ENCODE measurements at regions of chr14 and their contacts with region 1.

Region 1: GRCh38 chr14:35404449-35405303 is at the start of gene NFKBIA:
- DNase-seq: peak; percentile 91 to 99 (median 93)
- ATAC-seq: peak; percentile 79
- H3K4me3 ChIP-seq: peak within 1 kb of the TSS; percentile 85
- H3K4me3 Mint-ChIP-seq: peak within 1 kb of the TSS; percentile 92 to 97 (median 94)
- H3K27ac ChIP-seq: peak within 1 kb of the TSS; percentile 96
- H3K27ac Mint-ChIP-seq: peak within 1 kb of the TSS; percentile 96 to 99 (median 98)
- H3K4me1 ChIP-seq: peaks cover 42 to 43% of the 10 kb centered on the region in 2 donors
- H3K4me1 Mint-ChIP-seq: peaks cover 28 to 63% (median 53%) of the 10 kb centered on the region in 7 donors
- H3K27me3 ChIP-seq: no peaks in the 10 kb centered on the region
- H3K27me3 Mint-ChIP-seq: peaks cover 0 to 2% (median 0%) of the 10 kb centered on the region in 5 donors
- total RNA-seq, gene NFKBIA: 144 to 1,533 (median 246) TPM

Region 2: GRCh38 chr14:34539407-34540180 is 865.1 kb before region 1 on chr14 and contains the start of gene EAPP:
- CTCF ChIA-PET with region 1: no interaction called
- POLR2A ChIA-PET with region 1: no interaction called
- intact Hi-C with region 1: loop called in 1 of 2 experiments (anchors 10 kb)
- DNase-seq: peak; percentile 84 to 95 (median 91)
- ATAC-seq: peak; percentile 100
- H3K4me3 ChIP-seq: peak within 1 kb of the TSS; percentile 100
- H3K4me3 Mint-ChIP-seq: peak within 1 kb of the TSS; percentile 95 to 99 (median 99)
- H3K27ac ChIP-seq: peak within 1 kb of the TSS; percentile 97
- H3K27ac Mint-ChIP-seq: peak within 1 kb of the TSS; percentile 95 to 100 (median 99)
- H3K4me1 ChIP-seq: peaks cover 18 to 24% of the 10 kb centered on the region in 2 donors
- H3K4me1 Mint-ChIP-seq: peaks cover 5 to 45% (median 31%) of the 10 kb centered on the region in 7 donors
- H3K27me3 ChIP-seq: no peaks in the 10 kb centered on the region
- H3K27me3 Mint-ChIP-seq: no peaks in the 10 kb centered on the region
- total RNA-seq, gene EAPP: 34.8 to 84.3 (median 60.9) TPM

Region 3: GRCh38 chr14:34982417-34983147 is 422.1 kb before region 1 on chr14 and contains the start of gene SRP54:
- CTCF ChIA-PET with region 1: no interaction called
- POLR2A ChIA-PET with region 1: interaction called, 10 read pairs
- intact Hi-C with region 1: loop called (anchors 1 kb)
- DNase-seq: peak; percentile 97 to 100 (median 100)
- ATAC-seq: peak; percentile 96
- H3K4me3 ChIP-seq: peak within 1 kb of the TSS; percentile 82
- H3K4me3 Mint-ChIP-seq: no peak within 1 kb of the TSS
- H3K27ac ChIP-seq: peak within 1 kb of the TSS; percentile 98
- H3K27ac Mint-ChIP-seq: no peak within 1 kb of the TSS
- H3K4me1 ChIP-seq: peaks cover 22% of the 10 kb centered on the region in 2 donors
- H3K4me1 Mint-ChIP-seq: peaks cover 0 to 30% (median 9%) of the 10 kb centered on the region in 7 donors
- H3K27me3 ChIP-seq: no peaks in the 10 kb centered on the region
- H3K27me3 Mint-ChIP-seq: no peaks in the 10 kb centered on the region
- total RNA-seq, gene SRP54: 35.8 to 61.4 (median 52.0) TPM

Region 4: DNA sequence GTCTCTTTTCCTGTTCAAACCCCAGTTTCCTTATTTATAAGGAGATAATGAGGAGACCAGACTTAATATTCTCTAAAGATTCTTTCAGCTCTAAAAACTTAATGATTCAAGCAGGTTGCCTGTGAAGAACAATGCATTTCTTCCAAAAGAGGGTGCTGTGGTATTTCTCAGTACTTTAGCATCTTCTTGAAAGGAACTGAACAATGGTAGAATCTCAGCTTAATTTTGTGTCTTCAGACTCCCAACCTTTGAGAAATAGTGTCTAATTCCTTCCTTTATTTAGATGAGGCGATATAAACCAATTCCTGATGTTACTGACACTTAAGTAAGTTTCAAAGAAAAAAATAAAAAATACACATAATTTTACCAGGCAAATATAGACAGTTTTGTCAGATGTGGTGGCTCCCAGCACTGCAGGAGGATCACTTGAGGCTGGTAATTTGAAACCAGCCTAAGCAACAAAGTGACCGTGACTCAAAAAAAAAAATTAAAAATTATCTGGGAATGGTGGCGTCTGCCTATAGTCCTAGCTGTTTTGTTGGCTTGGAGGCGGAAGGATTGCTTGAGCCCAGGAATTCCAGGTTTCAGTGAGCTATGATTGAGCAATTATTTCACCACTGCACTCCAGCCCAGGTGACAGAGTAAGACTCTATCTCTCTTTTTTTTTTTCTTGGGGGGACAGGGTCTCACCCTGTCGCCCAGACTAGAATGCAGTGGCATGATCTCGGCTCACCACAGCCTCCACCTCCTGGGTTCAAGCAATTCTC is 189.4 kb before region 1 on chr14:
- CTCF ChIA-PET with region 1: interaction called, 8 read pairs
- POLR2A ChIA-PET with region 1: interaction called, 5 read pairs
- intact Hi-C with region 1: loop called (anchors 1 kb)
- DNase-seq: peak in 3 of 9 donors; percentile 11 to 19 (median 14)
- ATAC-seq: no peak
- H3K4me3 ChIP-seq: no peak overlapping the region
- H3K4me3 Mint-ChIP-seq: no peak overlapping the region
- H3K27ac ChIP-seq: no peak overlapping the region
- H3K27ac Mint-ChIP-seq: peak overlapping the region in 3 of 9 donors; percentile 31 to 48 (median 43)
- H3K4me1 ChIP-seq: no peaks in the 10 kb centered on the region
- H3K4me1 Mint-ChIP-seq: peaks cover 6 to 29% (median 12%) of the 10 kb centered on the region in 7 donors
- H3K27me3 ChIP-seq: no peaks in the 10 kb centered on the region
- H3K27me3 Mint-ChIP-seq: no peaks in the 10 kb centered on the region

Region 5: DNA sequence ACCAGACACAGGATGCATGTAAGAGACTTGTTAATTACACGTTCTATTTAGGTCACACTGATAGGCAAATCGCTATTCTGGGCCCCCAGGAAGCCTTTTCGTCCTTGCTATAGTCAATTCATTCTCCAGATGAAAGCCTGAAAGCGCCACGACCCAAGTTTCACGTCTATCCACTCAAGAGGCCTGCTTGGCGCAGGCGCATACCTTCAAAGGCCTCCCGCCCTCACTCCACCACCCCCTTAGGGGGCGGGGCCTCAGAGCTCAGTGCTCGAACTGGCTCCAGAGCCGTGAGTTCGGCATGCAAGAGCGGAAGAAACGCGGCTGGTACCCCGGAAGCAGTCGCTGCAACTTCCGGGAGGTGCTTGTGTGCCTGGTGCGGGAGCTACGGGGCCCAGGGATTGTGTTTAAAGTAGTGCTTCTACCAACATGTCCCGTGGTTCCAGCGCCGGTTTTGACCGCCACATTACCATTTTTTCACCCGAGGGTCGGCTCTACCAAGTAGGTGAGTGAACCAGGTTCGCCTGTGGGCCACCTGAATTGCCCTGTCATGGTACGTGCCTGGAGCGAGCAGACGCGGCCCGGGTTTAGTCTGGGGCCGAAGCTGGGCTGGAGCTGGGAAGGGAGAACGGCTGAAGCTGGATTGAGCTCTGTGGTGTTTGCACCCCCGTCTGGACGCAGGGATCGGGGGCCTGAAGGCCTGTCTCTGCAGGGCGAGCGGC is 112.5 kb before region 1 on chr14 and contains the start of gene PSMA6:
- CTCF ChIA-PET with region 1: interaction called, 12 read pairs
- POLR2A ChIA-PET with region 1: interaction called, 110 read pairs
- intact Hi-C with region 1: loop called (anchors 1 kb)
- DNase-seq: peak; percentile 96 to 99 (median 99)
- ATAC-seq: peak; percentile 99
- H3K4me3 ChIP-seq: peak within 1 kb of the TSS; percentile 89
- H3K4me3 Mint-ChIP-seq: peak within 1 kb of the TSS; percentile 92 to 99 (median 97)
- H3K27ac ChIP-seq: peak within 1 kb of the TSS; percentile 90
- H3K27ac Mint-ChIP-seq: peak within 1 kb of the TSS; percentile 94 to 99 (median 96)
- H3K4me1 ChIP-seq: peaks cover 16 to 22% of the 10 kb centered on the region in 2 donors
- H3K4me1 Mint-ChIP-seq: peaks cover 17 to 54% (median 51%) of the 10 kb centered on the region in 7 donors
- H3K27me3 ChIP-seq: no peaks in the 10 kb centered on the region
- H3K27me3 Mint-ChIP-seq: no peaks in the 10 kb centered on the region
- total RNA-seq, gene PSMA6: 76.6 to 274 (median 90.0) TPM

Region 6: DNA sequence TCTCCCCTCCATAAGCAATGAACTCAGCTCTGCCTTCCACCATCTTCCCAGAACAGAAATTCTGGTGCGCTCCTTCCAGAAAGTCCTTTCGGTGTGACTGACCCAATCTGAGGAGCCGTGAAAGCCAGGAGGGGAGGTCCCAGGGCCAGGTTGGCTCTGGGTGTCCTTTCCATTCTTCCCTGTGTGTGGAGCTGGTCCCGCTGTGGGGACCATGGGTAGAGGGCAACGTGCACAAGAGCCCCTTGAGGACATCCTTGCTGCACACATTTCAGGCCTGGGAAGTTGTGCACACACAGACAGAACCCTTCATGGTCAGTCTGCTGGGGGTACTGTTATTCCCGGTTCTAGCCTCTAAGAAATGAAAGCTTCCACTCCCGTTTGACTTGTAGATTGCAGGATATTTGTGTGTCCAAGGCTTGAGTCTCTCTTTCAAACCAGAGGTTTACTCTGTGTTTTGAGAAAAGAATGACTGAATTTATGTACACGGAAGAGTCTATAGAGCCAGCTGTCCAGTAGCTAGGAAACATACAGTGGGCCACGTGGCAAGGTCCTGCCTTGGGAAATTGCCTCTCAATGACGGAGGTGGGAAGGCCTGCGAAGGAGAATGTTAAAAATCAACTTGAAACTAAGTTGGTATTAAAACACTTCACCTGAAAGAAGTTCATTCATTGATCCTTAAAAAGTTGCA is 10.2 kb before region 1 on chr14:
- CTCF ChIA-PET with region 1: no interaction called
- POLR2A ChIA-PET with region 1: interaction called, 12 read pairs
- intact Hi-C with region 1: no loop called
- DNase-seq: no peak
- ATAC-seq: no peak
- H3K4me3 ChIP-seq: no peak overlapping the region
- H3K4me3 Mint-ChIP-seq: no peak overlapping the region
- H3K27ac ChIP-seq: no peak overlapping the region
- H3K27ac Mint-ChIP-seq: no peak overlapping the region
- H3K4me1 ChIP-seq: peaks cover 0 to 4% of the 10 kb centered on the region in 2 donors
- H3K4me1 Mint-ChIP-seq: peaks cover 3 to 23% (median 16%) of the 10 kb centered on the region in 7 donors
- H3K27me3 ChIP-seq: no peaks in the 10 kb centered on the region
- H3K27me3 Mint-ChIP-seq: no peaks in the 10 kb centered on the region

Region 7: GRCh38 chr14:36320200-36320896 is 915.7 kb after region 1 on chr14 and contains the start of gene MBIP:
- CTCF ChIA-PET with region 1: no interaction called
- POLR2A ChIA-PET with region 1: no interaction called
- intact Hi-C with region 1: loop called in 1 of 2 experiments (anchors 5 kb)
- DNase-seq: peak; percentile 65 to 96 (median 85)
- ATAC-seq: peak; percentile 99
- H3K4me3 ChIP-seq: peak within 1 kb of the TSS; percentile 97
- H3K4me3 Mint-ChIP-seq: peak within 1 kb of the TSS; percentile 88 to 99 (median 98)
- H3K27ac ChIP-seq: peak within 1 kb of the TSS; percentile 81
- H3K27ac Mint-ChIP-seq: peak within 1 kb of the TSS; percentile 90 to 97 (median 95)
- H3K4me1 ChIP-seq: peaks cover 4 to 12% of the 10 kb centered on the region in 2 donors
- H3K4me1 Mint-ChIP-seq: peaks cover 16 to 52% (median 46%) of the 10 kb centered on the region in 7 donors
- H3K27me3 ChIP-seq: no peaks in the 10 kb centered on the region
- H3K27me3 Mint-ChIP-seq: peaks cover 6 to 25% (median 10%) of the 10 kb centered on the region in 5 donors
- total RNA-seq, gene MBIP: 22.5 to 42.7 (median 24.6) TPM

Region 8: DNA sequence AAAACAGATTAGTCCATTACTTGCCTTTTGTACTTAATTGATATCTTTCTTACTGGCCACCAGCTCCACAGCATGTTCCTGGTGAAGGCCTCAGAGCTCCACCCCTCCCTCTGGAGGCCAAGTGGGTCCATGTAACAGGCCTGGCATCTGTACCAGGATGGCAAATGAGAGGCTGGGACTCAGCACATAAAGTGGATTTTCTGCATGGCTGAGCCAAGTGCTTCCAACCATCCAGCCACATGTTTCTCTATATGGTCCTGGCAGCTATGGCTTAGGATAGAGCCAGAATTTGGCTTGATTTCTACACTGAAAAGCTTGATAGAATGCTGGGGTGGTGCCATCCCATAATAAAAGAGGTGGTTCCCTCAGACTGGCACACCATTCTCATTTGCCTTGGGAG is 1351.0 kb after region 1 on chr14:
- CTCF ChIA-PET with region 1: no interaction called
- POLR2A ChIA-PET with region 1: no interaction called
- intact Hi-C with region 1: no loop called
- DNase-seq: no peak
- ATAC-seq: no peak
- H3K4me3 ChIP-seq: no peak overlapping the region
- H3K4me3 Mint-ChIP-seq: no peak overlapping the region
- H3K27ac ChIP-seq: no peak overlapping the region
- H3K27ac Mint-ChIP-seq: no peak overlapping the region
- H3K4me1 ChIP-seq: no peaks in the 10 kb centered on the region
- H3K4me1 Mint-ChIP-seq: no peaks in the 10 kb centered on the region
- H3K27me3 ChIP-seq: no peaks in the 10 kb centered on the region
- H3K27me3 Mint-ChIP-seq: peaks cover 0 to 3% (median 0%) of the 10 kb centered on the region in 5 donors

Measured in naive thymus-derived CD4-positive, alpha-beta T cell (primary cell).